ENCODE measurements at regions of chr19 and their contacts with region 1.

Region 1: DNA sequence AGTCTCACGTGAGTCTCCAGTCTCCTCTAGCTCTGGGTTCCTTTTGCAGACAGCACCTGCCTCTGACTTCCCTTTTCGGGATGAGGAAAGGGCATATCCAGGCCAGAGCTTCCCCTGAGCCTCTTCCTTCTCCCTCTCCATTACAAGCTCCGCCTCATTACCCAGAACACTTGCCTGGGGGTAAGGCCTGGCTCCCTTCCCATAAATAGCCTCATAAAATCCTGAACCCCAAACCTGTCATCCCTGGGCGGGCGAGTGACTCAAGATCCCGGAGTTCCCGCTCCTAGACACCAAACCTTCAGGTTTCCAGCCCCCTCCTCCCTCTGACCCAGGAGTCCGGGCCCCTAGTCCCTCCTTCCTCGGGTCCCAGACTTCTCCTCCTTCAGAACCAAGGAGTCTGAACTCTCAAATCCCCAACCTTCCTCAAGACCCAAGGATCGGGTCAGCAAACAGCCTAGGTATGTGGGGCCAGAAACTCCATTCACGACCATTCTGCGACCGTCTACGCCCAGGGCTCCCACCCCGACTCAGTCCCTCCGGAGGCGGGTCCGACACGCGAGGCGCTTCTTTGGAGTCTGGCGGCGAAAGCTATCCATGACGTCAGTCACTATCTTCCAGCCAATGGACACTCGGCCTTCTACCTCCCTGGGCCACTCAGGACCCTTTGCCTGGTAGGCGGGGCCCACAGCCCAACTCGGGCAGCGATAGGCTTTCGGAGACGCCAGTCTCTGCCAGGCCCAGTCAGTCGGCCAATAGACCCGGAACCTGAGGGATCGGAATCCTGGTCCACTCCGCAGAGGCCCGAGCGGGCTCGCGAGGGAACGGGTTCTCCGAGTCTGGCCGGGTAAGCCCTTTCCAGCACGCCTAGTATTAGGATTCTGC is 6.5 kb upstream of the CNFN start:
- DNase-seq: peak; percentile 100

Region 2: DNA sequence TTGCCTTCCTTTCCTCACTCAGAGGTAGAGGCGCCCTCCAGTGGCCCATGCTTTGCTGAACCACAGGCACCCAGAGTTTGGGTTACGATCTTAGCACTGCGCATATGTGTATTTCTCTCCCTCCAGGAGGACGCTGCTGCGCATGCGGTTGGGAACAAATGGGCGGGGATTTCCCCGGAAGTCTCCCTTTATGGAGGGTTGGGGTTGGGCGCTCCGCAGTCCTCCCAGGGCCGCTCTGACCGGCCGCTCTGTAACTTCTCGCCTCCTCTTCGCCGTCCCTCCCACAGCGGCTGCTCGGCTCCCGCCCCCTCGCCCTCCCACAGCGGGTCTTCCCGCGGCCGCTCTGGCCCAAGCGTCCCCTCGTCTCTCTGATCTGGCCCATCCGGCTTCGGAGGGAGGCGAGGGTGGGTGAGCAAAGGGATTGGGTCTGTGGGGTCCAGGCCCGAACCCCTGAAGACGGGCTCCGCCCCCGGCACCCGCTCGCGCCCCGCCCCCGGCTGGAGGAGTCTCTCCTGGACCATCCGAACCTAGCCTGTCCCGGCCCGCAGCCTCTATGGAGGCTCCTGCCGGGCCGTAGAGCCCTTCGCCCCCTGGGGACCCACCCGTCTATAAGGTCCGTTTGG is 71.2 kb before region 1 on chr19 and contains the start of gene MEGF8:
- intact Hi-C with region 1: loop called (anchors 5 kb)
- DNase-seq: peak; percentile 99
- total RNA-seq, gene MEGF8: 45.8 TPM

Measured in cardiac septum (tissue), 1 donor.